Endothelial cell of umbilical vein (primary cell): ENCODE measurements at regions of chr9 and their contacts with region 1.

Region 1: DNA sequence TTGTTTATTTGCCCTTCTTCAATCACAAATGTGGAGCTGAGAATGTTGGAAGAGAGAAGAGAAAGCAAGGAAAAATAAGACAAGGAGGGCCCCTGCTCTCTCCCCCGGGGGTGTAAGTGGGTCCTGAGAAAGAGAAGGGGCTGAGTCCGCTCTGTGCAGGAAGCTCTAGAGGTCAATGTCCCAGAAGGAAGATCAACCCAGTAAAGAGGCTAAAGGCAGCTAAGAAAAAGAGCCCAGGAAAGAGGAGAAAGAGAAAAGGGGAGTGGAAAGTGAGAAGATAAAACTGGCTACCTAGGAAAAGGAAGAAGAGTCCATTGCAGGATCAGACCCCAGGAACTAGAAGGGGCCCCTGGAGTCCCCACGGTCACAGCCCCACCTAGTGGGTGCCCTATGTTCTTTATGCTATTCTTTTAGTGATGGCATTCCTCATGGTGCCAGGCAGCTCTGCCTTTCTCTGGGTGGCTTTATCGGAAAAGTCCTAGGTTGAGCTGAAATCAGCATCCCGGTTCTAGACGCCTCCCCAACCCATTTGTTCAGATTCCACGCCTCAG is 583.4 kb downstream of the ACTL7B start:
- DNase-seq: peak; percentile 29
- H3K4me3 ChIP-seq: no peak overlapping the region
- H3K27ac ChIP-seq: no peak overlapping the region
- H3K4me1 ChIP-seq: no peaks in the 10 kb centered on the region
- H3K27me3 ChIP-seq: no peaks in the 10 kb centered on the region
- CTCF ChIP-seq: peak; percentile 47 to 59
- POLR2A ChIP-seq: no peak

Region 2: DNA sequence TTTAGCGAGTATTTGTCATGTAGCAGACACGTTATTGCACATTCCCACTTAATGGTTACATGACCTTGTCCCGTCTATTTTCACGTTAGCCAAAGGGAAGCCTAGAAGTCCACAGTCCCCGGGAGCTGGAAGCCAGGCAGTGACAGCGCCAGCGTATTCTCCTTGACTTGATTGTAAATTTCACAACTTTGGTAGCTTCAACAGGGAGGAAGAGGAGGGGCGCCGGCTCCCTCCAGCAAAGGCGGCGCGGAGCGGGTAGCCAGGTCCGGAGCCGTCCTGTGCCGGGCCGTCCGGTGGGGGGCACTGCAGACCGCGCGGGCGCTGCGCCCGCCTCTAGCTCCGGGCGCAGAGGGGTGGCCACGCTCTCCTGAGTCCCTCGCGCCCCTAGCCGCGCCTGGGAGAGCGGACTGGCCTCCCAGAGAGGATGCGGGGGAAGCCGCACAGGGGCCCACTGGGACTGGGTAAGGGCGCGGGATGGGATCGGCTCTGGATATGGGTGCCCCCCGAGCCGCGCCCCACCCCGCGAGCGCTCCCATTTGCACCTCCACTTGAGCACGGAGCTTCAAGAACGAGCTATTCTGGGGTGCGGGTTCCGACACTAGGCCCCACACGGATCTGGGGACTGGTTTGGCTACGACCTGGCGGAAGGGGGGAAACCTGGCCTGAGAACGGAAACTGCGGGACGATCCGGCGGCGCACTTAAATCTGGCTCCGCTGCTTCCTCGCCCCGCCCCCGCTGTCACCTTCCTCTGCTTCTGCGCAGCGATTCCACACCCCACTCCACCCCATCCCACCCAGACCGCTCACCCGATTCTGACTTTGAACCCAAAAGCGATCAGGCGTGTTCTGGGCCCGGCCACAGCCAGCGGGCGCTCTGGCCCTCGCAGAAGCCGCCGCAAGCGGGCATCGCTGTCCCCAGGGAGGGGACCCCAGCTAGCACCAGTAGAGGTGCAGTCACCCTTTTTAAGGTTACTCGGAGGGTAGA is 806.7 kb before region 1 on chr9:
- CTCF ChIA-PET with region 1: interaction called, 30 read pairs
- POLR2A ChIA-PET with region 1: no interaction called
- dilution Hi-C with region 1: no loop called
- intact Hi-C with region 1: loop called (anchors 1 kb)
- DNase-seq: peak; percentile 47
- H3K4me3 ChIP-seq: peak overlapping the region; percentile 32 to 57 (median 46)
- H3K27ac ChIP-seq: no peak overlapping the region
- H3K4me1 ChIP-seq: peaks cover 3% of the 10 kb centered on the region
- H3K27me3 ChIP-seq: peaks cover 0 to 3% of the 10 kb centered on the region in 2 experiments
- CTCF ChIP-seq: peak; percentile 86 to 88
- POLR2A ChIP-seq: no peak

Region 3: DNA sequence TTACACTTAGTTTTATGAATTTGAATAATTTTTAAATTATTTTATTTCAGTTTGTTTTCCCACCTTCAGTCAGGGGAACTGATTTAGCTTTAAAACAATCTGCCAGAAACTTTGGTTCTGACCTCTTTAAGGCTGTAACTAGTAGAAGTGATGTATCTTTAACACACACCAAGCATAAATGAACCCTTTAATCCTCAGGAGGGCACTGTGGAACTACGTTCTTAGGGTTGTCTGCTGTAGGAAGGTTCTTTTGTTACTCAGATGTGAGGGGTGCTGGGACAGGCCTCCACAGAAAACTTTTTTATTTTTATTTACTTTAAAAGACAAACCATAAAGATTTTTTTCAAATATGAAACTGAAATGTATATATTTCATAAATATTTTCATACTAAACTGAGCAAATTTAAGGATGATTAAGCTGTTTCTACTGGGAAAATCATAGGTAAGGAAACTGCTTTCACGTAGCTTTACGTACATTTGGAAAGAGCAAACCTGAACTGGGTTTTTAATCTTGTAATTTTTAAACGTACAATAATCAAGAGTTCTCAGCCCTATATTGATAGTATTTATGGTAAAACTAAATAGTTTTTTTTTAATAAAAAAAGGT is 788.2 kb before region 1 on chr9:
- CTCF ChIA-PET with region 1: interaction called, 26 read pairs
- POLR2A ChIA-PET with region 1: no interaction called
- dilution Hi-C with region 1: no loop called
- intact Hi-C with region 1: loop called (anchors 1 kb)
- DNase-seq: peak; percentile 84
- H3K4me3 ChIP-seq: no peak overlapping the region
- H3K27ac ChIP-seq: no peak overlapping the region
- H3K4me1 ChIP-seq: peaks cover 8% of the 10 kb centered on the region
- H3K27me3 ChIP-seq: peaks cover 3 to 8% of the 10 kb centered on the region in 2 experiments
- CTCF ChIP-seq: peak; percentile 36 to 45
- POLR2A ChIP-seq: no peak

Region 4: DNA sequence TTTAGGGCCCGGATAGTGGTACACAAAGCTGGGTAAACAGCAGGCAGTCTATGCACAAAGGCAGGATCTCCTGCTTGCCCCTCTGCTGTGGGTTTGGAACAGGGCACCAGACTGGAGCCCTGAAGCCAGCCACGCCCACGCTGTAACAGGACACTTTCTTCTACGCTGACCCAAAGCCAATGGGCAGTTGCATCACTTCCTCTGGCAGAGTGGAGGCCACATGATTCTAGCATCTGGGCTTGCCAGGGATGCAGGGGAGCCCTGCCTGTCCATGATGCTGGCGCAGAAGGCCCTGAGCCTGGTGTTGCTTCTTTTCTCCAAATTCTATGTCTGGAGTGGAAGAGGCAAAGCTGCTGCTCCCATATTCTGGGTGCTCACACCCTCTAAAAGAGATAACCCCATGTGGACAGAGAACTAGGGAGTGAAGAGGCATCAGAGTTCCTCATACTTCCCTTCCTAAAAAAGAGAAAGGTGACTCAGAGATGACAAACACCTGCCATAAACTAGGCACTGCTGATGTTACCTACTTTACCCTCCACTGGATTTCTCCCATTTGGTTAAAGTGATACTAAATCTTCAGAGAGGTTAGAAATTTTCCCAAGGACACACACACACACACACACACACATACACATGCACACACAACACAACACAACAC is 522.5 kb before region 1 on chr9:
- CTCF ChIA-PET with region 1: interaction called, 10 read pairs
- POLR2A ChIA-PET with region 1: no interaction called
- dilution Hi-C with region 1: no loop called
- intact Hi-C with region 1: no loop called
- DNase-seq: peak; percentile 84
- H3K4me3 ChIP-seq: no peak overlapping the region
- H3K27ac ChIP-seq: peak overlapping the region; percentile 60
- H3K4me1 ChIP-seq: peaks cover 46% of the 10 kb centered on the region
- H3K27me3 ChIP-seq: no peaks in the 10 kb centered on the region
- CTCF ChIP-seq: no peak
- POLR2A ChIP-seq: peak; percentile 7

Region 5: DNA sequence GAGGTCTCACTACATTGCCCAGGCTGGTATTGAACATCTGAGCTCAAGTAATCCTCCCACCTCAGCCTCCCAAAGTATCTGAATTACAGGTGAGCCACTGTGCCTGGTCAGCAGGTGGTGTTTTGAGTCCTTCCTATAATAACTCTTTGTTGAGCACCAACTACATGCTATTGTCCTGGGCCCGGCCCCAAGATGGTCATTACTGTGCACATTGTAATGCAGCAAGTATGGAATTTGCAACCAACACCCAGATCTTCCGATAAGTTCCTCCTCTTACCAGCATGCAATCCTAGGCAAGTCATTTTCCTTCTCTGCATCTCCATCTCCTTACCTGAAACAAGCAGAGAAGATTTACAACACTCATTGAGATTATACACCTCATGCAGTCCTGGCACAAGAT is 272.5 kb before region 1 on chr9:
- CTCF ChIA-PET with region 1: no interaction called
- POLR2A ChIA-PET with region 1: no interaction called
- dilution Hi-C with region 1: no loop called
- intact Hi-C with region 1: loop called (anchors 10 kb)
- DNase-seq: no peak
- H3K4me3 ChIP-seq: no peak overlapping the region
- H3K27ac ChIP-seq: no peak overlapping the region
- H3K4me1 ChIP-seq: no peaks in the 10 kb centered on the region
- H3K27me3 ChIP-seq: no peaks in the 10 kb centered on the region
- CTCF ChIP-seq: no peak
- POLR2A ChIP-seq: no peak

Region 6: GRCh38 chr9:108125625-108126024 is 146.8 kb before region 1 on chr9:
- CTCF ChIA-PET with region 1: no interaction called
- POLR2A ChIA-PET with region 1: no interaction called
- dilution Hi-C with region 1: no loop called
- intact Hi-C with region 1: loop called (anchors 1 kb)
- DNase-seq: no peak
- H3K4me3 ChIP-seq: no peak overlapping the region
- H3K27ac ChIP-seq: no peak overlapping the region
- H3K4me1 ChIP-seq: no peaks in the 10 kb centered on the region
- H3K27me3 ChIP-seq: no peaks in the 10 kb centered on the region
- CTCF ChIP-seq: peak; percentile 41 to 52
- POLR2A ChIP-seq: no peak

Region 7: GRCh38 chr9:108282872-108283271 is 10.4 kb after region 1 on chr9:
- CTCF ChIA-PET with region 1: interaction called, 12 read pairs
- POLR2A ChIA-PET with region 1: no interaction called
- dilution Hi-C with region 1: no loop called
- intact Hi-C with region 1: no loop called
- DNase-seq: no peak
- H3K4me3 ChIP-seq: no peak overlapping the region
- H3K27ac ChIP-seq: no peak overlapping the region
- H3K4me1 ChIP-seq: no peaks in the 10 kb centered on the region
- H3K27me3 ChIP-seq: no peaks in the 10 kb centered on the region
- CTCF ChIP-seq: peak in 1 of 2 donors; percentile 27
- POLR2A ChIP-seq: no peak

Region 8: GRCh38 chr9:108634204-108634603 is 361.8 kb after region 1 on chr9:
- CTCF ChIA-PET with region 1: no interaction called
- POLR2A ChIA-PET with region 1: no interaction called
- dilution Hi-C with region 1: no loop called
- intact Hi-C with region 1: no loop called
- DNase-seq: no peak
- H3K4me3 ChIP-seq: no peak overlapping the region
- H3K27ac ChIP-seq: no peak overlapping the region
- H3K4me1 ChIP-seq: no peaks in the 10 kb centered on the region
- H3K27me3 ChIP-seq: no peaks in the 10 kb centered on the region
- CTCF ChIP-seq: no peak
- POLR2A ChIP-seq: no peak